Activated naive CD4-positive, alpha-beta T cell treated with anti-CD3 and anti-CD28 coated beads for 36 hours (primary cell): ENCODE measurements at regions of chr17 and their contacts with region 1.

Region 1: DNA sequence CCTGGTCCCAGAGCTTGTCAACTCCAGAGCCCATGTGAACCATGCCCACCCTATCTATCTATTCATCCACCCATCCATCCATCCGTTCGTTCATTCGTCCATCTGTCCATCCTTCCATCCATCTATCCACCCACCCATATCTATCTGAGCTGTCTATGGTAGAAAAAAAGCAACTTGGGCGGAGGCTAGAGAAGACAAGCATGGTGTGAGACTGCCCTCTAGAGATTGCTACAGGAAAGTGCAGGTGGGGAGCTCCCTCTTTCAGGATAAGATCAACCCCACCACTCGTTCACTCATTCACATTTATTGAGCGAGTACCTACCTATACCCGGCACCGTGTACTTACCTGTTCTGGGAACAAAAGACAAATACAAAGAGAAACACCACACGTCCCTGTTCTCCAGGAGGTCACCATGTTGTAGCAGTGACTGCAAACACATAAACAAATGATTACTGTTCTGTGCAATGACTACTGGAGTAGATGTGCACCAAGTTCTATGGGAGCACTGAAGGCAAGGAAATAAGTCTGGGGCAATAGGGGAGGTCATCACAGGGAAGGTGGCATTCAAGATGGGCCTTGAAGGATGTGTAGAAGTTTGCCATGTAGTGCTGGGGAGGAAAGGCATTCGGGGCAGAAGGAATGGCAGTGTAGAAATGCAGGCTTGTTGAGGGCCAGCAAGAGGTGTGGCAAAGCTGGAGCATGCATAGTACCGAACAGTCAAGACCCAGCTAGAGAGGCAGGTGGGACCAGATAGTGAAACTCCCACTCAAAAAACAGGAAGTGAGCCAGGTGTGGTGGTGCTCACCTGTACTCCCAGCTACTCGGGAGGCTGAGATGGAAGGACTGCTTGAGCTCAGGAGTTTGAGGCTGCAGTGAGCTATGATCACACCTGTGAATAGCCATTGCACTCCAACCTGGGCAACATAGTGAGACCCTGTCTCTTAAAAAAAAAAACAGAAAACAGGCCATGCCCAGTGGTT is 13.4 kb upstream of the ATP5MC1 start:
- DNase-seq: peak; percentile 68
- H3K4me3 Mint-ChIP-seq: no peak overlapping the region
- H3K27ac Mint-ChIP-seq: no peak overlapping the region
- H3K4me1 Mint-ChIP-seq: no peaks in the 10 kb centered on the region
- H3K27me3 Mint-ChIP-seq: peaks cover 6% of the 10 kb centered on the region

Region 2: DNA sequence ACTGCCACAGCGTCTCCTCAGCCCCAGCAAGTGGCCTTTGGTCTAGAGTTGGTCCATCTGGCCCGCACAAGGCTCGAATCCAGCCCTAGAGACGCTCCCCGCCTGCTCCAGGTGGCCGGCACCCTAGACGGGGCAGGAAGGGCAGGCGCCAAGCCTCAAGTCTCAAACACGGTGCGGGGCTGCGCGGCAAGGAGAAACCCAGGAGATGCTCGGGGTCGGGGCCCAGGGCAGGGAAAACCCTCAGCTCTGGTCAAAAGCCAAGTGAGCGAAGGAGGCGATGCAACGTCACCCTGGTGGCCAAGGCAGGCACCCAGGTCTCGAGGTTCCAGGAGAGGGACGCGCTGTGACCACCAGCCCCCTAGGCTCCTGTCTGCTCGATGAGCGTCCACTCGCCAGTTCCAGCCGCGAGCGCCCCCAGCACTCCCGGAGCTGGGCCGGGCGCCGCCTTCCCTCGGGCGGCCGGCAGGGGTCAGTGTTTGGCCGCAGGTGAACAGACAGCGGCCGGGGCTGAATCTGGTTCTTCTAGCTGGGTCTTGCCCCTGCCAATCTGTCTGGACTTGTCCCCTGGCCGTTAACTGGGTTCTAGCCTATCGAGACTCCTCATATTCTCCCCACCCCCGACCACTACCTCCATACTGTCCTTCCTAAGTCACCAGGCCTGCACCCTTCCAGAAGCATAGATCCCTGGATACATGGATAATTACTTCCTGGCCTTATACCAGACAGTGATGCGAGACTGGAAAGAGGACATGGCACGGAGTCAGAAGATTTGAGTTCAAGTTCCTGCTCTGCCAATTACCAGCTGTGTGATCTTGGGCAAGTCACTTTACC is 200.9 kb before region 1 on chr17:
- CTCF ChIA-PET with region 1: interaction called, 46 read pairs
- intact Hi-C with region 1: loop called (anchors 1 kb)
- DNase-seq: peak; percentile 74
- H3K4me3 Mint-ChIP-seq: no peak overlapping the region
- H3K27ac Mint-ChIP-seq: no peak overlapping the region
- H3K4me1 Mint-ChIP-seq: peaks cover 4% of the 10 kb centered on the region
- H3K27me3 Mint-ChIP-seq: peaks cover 20% of the 10 kb centered on the region

Region 3: GRCh38 chr17:48724251-48725003 is 154.8 kb before region 1 on chr17:
- CTCF ChIA-PET with region 1: interaction called, 42 read pairs
- intact Hi-C with region 1: loop called (anchors 1 kb)
- DNase-seq: peak; percentile 94
- H3K4me3 Mint-ChIP-seq: peak overlapping the region; percentile 57
- H3K27ac Mint-ChIP-seq: no peak overlapping the region
- H3K4me1 Mint-ChIP-seq: peaks cover 43% of the 10 kb centered on the region
- H3K27me3 Mint-ChIP-seq: peaks cover 92% of the 10 kb centered on the region

Region 4: GRCh38 chr17:48804925-48805411 is 74.2 kb before region 1 on chr17:
- CTCF ChIA-PET with region 1: interaction called, 348 read pairs
- intact Hi-C with region 1: loop called (anchors 1 kb)
- DNase-seq: peak; percentile 78
- H3K4me3 Mint-ChIP-seq: no peak overlapping the region
- H3K27ac Mint-ChIP-seq: no peak overlapping the region
- H3K4me1 Mint-ChIP-seq: no peaks in the 10 kb centered on the region
- H3K27me3 Mint-ChIP-seq: peaks cover 5% of the 10 kb centered on the region

Region 5: GRCh38 chr17:48850792-48851323 is 28.4 kb before region 1 on chr17:
- CTCF ChIA-PET with region 1: interaction called, 14 read pairs
- intact Hi-C with region 1: no loop called
- DNase-seq: no peak
- H3K4me3 Mint-ChIP-seq: no peak overlapping the region
- H3K27ac Mint-ChIP-seq: no peak overlapping the region
- H3K4me1 Mint-ChIP-seq: peaks cover 2% of the 10 kb centered on the region
- H3K27me3 Mint-ChIP-seq: no peaks in the 10 kb centered on the region

Region 6: DNA sequence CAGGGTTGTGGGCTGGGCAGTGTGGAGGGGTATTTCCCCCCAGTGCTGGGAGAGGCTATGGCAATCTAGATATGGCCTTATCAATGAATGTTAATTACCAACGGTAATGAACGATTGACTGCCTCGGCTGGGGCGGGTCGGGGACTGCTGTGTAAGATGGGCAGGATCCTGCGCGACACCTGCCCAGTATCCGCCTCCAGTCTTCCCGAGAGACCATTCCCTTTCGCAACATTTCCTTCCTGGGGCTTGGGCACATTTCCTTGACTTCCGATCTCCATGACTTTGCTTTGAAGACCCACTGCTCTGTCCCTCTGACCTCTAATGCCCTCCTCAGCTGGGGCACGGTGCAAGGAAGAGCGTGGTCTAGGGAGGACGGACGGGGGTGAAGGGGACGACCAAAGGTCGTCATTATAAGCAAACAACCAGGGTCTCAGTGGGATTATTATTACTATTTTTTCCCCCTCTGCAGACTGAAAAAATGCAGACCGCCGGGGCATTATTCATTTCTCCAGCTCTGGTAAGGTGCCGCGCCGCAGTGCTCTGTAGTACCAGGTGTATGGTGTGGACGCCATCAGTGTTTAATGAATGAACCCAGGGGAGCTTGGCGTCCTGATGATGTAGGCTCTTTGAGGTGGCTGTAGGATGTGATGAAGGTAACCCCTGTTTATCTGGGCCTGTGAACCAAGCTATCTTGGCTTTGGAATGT is 13.9 kb after region 1 on chr17:
- CTCF ChIA-PET with region 1: interaction called, 16 read pairs
- intact Hi-C with region 1: no loop called
- DNase-seq: peak; percentile 21
- H3K4me3 Mint-ChIP-seq: peak overlapping the region; percentile 99
- H3K27ac Mint-ChIP-seq: peak overlapping the region; percentile 95
- H3K4me1 Mint-ChIP-seq: peaks cover 25% of the 10 kb centered on the region
- H3K27me3 Mint-ChIP-seq: no peaks in the 10 kb centered on the region

Region 7: DNA sequence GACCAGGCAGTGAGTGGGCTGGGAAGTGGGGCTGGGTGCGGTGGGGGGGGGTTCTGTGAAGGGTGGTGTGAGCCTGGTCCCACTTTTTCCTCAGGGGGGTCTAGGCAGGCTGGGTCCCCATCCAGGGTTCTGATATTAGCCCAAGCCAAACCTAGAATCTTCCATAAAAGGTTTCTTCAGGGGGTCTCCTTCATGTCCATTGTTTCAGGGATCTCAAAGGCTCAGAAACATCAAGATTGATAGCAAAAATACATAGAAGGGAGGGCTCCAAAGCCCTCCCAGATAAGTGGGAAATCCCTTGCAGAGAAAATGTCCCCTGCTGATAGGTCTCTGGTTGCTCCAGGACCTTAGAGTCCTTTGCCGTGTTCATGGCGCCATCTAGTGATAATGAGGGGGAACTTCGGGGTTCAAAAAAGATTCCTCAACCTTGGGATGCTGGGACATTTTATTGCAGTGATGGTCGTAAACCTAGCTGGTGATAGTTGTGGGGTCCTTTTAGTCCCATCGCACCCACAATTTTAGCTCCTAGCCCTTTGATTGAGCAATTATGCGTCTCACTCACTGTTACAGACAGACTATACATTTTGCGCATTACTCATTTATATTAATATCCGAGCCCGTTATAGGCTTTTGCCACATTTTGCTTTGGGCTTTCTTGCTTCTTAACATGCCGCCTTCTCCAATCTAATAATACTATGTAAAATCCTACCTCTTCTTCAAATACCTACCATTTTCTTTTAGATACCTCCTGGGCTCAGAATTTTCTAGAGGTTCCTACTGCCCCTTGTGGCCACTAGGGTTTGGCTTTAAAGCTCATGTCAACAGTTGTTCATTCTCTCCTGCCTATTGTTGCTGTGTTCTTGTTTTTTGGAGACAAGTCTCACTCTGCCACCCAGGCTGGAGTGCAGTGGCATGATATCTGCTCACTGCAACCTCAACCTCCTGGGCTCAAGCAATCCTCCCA is 153.0 kb after region 1 on chr17:
- CTCF ChIA-PET with region 1: interaction called, 14 read pairs
- intact Hi-C with region 1: loop called (anchors 1 kb)
- DNase-seq: peak; percentile 65
- H3K4me3 Mint-ChIP-seq: no peak overlapping the region
- H3K27ac Mint-ChIP-seq: no peak overlapping the region
- H3K4me1 Mint-ChIP-seq: peaks cover 4% of the 10 kb centered on the region
- H3K27me3 Mint-ChIP-seq: peaks cover 4% of the 10 kb centered on the region

Region 8: DNA sequence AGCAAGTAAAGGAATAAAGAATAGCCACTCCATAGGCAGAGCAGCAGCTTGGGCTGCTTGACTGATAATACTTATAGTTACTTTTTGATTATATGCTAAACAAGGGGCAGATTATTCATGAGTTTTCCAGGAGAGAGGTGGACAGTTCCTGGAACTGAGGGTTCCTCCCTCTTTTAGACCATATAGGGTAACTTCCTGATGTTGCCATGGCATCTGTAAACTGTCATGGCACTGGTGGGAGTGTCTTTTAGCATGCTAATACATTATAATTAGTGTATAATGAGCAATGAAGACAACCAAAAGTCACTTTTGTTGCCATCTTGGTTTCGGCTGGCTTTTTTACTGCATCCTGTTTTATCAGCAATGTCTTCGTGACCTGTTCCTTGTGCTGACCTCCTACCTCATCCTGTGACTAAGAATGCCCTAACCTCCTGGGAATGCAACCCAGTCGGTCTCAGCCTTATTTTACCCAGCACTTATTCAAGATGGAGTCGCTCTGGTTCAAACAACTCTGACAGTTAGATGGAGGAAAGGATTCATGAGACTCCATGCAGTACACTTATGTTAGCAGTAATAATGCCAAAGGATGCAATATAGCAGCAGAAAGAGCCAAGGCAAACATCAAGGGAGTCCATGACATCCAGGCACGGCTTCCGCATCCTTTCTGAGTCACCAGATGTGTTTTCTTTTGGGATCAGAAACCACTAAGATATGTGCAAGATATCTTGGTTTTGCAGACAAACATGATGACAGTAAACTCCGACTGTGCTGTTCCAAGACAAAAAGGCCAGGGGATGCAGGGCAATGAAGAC is 197.6 kb after region 1 on chr17:
- CTCF ChIA-PET with region 1: no interaction called
- intact Hi-C with region 1: no loop called
- DNase-seq: no peak
- H3K4me3 Mint-ChIP-seq: no peak overlapping the region
- H3K27ac Mint-ChIP-seq: no peak overlapping the region
- H3K4me1 Mint-ChIP-seq: no peaks in the 10 kb centered on the region
- H3K27me3 Mint-ChIP-seq: peaks cover 17% of the 10 kb centered on the region